CD8-positive, alpha-beta T cell (primary cell): ENCODE measurements at regions of chrX and their contacts with region 1.

Region 1: DNA sequence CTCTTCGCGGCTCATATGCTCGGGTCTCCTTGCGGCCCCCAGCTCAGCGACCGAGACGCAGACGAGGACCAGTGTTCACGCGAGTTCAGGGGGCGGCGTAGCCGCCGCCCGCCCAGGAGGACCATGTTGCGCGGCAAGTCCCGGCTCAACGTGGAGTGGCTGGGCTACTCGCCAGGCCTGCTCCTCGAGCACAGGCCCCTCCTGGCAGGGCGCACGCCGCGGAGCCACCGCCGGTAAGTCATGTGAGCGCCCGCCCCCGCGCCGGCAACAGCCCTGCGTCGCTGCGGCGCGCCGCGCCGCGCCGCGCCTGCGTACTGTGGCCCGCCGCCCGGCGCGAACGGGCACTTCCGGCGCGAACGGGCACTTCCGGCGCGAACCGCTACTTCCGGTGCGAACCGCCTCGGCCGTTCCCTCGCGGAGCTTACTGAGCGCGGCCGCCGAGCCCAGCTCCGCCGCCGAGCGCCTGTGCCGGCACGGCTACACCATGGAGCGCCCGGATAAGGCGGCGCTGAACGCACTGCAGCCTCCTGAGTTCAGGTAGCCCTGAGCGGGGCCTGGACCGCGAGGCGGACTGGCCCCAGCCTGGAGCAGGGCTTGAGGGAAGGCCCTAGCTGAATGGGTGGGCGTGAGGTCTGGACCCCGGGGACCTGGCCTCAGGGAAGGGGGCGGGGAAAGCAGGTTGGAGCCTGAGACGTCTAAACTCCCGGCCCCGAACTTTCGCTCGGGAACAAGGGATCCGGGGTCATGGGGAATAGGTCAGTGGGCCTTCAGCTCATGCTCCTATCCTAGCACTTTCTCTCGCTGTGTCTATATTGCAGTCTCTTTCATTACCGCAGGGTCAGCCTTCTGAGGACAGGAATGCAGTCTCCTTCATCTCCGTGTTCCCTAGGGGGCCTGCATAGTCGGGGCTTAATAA is at the start of gene VMA21:
- DNase-seq: peak; percentile 54 to 90 (median 77)
- ATAC-seq: peak; percentile 74
- H3K4me3 ChIP-seq: peak within 1 kb of the TSS; percentile 70 to 82
- H3K4me3 Mint-ChIP-seq: peak within 1 kb of the TSS; percentile 88
- H3K27ac ChIP-seq: peak within 1 kb of the TSS; percentile 89 to 96
- H3K27ac Mint-ChIP-seq: peak within 1 kb of the TSS; percentile 98
- H3K4me1 ChIP-seq: peaks cover 57% of the 10 kb centered on the region
- H3K4me1 Mint-ChIP-seq: peaks cover 68% of the 10 kb centered on the region
- H3K27me3 ChIP-seq: no peaks in the 10 kb centered on the region
- H3K27me3 Mint-ChIP-seq: no peaks in the 10 kb centered on the region
- CTCF ChIP-seq: no peak
- total RNA-seq, gene VMA21: 17.9 to 19.3 TPM

Region 2: DNA sequence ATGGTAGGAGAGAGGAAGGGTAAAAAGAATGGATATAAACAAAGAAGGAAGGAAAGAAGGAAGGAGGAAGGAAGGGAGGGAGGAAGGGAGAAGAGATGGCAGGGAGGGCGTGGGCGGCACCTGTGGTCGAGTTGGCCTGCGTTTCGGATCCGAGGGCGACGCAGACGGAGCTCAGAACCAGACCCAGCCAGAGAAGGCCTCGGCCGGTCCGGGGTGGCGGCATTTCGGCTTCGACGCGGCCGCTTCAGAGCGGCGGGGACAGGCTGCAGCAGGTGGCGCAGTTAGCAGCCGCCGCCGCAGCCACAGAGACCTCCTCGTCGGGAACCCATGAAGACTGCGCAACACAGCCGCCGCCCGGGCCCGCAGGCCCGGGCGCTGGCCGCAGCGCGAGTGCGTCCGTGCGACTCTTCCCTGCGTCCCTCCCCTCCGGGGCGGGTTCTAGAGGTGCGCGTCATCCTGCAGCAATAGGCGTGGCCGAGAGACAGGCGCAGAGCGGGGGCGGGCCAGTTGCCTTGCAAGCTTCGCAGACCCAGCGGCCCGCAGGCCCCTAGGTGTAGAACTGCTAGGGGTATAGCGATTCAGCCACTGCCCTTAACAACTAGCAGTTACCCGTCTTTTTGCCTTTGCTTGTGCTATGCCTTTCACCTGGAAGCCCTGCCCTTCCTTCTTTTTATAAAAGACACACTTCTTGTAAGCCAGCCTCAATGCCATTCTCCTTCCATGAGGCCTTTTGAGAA is 1892.0 kb before region 1 on chrX and contains the start of gene IDS:
- CTCF ChIA-PET with region 1: no interaction called
- POLR2A ChIA-PET with region 1: no interaction called
- intact Hi-C with region 1: loop called in 1 of 2 experiments (anchors 10 kb)
- DNase-seq: peak; percentile 75 to 94 (median 87)
- ATAC-seq: peak; percentile 67
- H3K4me3 ChIP-seq: peak within 1 kb of the TSS; percentile 80 to 87
- H3K4me3 Mint-ChIP-seq: peak within 1 kb of the TSS; percentile 91
- H3K27ac ChIP-seq: peak within 1 kb of the TSS; percentile 98
- H3K27ac Mint-ChIP-seq: peak within 1 kb of the TSS; percentile 95
- H3K4me1 ChIP-seq: peaks cover 20% of the 10 kb centered on the region
- H3K4me1 Mint-ChIP-seq: peaks cover 34% of the 10 kb centered on the region
- H3K27me3 ChIP-seq: no peaks in the 10 kb centered on the region
- H3K27me3 Mint-ChIP-seq: no peaks in the 10 kb centered on the region
- CTCF ChIP-seq: no peak
- total RNA-seq, gene IDS: 230 to 240 TPM

Region 3: GRCh38 chrX:150898343-150899190 is 498.5 kb before region 1 on chrX and contains the start of gene CD99L2:
- CTCF ChIA-PET with region 1: no interaction called
- POLR2A ChIA-PET with region 1: no interaction called
- intact Hi-C with region 1: loop called in 1 of 2 experiments (anchors 5 kb)
- DNase-seq: peak; percentile 83 to 93 (median 89)
- ATAC-seq: peak; percentile 92
- H3K4me3 ChIP-seq: peak within 1 kb of the TSS; percentile 76 to 77
- H3K4me3 Mint-ChIP-seq: peak within 1 kb of the TSS; percentile 91
- H3K27ac ChIP-seq: peak within 1 kb of the TSS; percentile 36 to 63
- H3K27ac Mint-ChIP-seq: peak within 1 kb of the TSS; percentile 67
- H3K4me1 ChIP-seq: peaks cover 6% of the 10 kb centered on the region
- H3K4me1 Mint-ChIP-seq: peaks cover 11% of the 10 kb centered on the region
- H3K27me3 ChIP-seq: no peaks in the 10 kb centered on the region
- H3K27me3 Mint-ChIP-seq: no peaks in the 10 kb centered on the region
- CTCF ChIP-seq: no peak
- total RNA-seq, gene CD99L2: 6.4 TPM

Region 4: DNA sequence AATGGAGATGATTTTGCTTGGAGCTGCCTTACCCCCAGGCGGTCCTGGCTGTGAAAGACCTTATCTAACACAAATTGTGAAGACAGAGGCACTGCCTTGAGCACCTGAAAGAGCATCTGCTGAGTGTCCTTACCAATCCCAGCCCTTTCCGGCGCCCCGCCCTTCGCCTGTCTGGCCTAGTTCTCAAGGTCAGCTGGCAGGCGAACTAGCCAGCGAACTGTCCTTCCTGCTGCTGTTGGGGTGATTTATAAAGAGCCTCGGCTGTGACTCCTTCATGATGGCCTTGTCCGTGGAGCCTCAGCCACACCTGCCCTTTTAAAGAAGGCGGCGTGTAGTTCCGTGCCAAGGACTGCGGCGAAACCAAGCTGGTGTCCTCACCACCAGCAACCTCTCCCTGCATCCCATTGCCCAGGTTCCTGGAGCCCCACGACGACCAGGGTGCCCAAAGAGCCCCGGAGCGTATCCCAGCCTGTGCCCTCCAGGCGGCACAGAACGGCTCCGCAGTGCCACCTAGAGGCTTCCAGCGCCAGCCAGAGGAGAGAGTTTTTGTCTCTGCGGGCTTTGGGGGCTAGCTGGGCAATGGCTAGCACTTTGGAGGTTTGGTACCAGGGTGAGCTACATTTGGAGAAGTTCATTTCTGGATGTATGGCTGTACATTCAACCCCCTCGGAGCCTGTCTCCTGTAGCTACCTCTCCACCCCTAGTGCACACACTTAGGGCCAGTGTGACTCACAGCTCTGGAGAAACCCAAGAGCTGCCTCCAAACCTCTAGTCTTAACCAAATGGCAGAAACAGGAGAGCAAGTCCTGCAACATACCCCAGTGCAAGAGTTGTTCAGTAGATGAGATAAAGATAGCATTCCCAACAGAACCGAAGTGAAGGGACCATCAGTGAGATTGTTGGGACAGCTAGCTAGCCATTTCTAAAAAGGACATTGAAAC is 36.9 kb before region 1 on chrX:
- CTCF ChIA-PET with region 1: no interaction called
- POLR2A ChIA-PET with region 1: no interaction called
- intact Hi-C with region 1: loop called in 1 of 2 experiments (anchors 5 kb)
- DNase-seq: peak; percentile 4 to 54 (median 35)
- ATAC-seq: peak; percentile 54
- H3K4me3 ChIP-seq: no peak overlapping the region
- H3K4me3 Mint-ChIP-seq: peak overlapping the region; percentile 37
- H3K27ac ChIP-seq: no peak overlapping the region
- H3K27ac Mint-ChIP-seq: no peak overlapping the region
- H3K4me1 ChIP-seq: peaks cover 6% of the 10 kb centered on the region
- H3K4me1 Mint-ChIP-seq: peaks cover 3% of the 10 kb centered on the region
- H3K27me3 ChIP-seq: no peaks in the 10 kb centered on the region
- H3K27me3 Mint-ChIP-seq: peaks cover 16% of the 10 kb centered on the region
- CTCF ChIP-seq: peak; percentile 45

Region 5: DNA sequence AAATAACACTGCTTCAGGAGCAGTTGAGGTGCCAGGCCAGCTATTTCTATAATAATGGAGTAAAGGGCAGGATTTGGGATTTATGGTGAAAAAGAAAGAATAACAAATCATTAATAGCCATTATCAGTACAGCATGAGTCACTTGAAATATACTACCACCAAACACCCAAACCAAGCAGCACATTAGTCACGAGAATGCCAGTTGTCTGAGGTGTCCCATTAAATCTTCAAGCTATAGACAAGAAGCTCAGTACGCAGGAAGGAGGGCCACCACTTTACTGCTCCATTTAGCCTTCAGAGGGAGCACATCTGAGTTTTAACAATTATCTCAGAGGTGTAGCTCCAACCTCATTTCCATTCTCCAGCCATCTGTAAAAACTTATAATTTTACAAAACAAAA is 848.2 kb after region 1 on chrX:
- CTCF ChIA-PET with region 1: no interaction called
- POLR2A ChIA-PET with region 1: no interaction called
- intact Hi-C with region 1: no loop called
- DNase-seq: no peak
- ATAC-seq: no peak
- H3K4me3 ChIP-seq: no peak overlapping the region
- H3K4me3 Mint-ChIP-seq: no peak overlapping the region
- H3K27ac ChIP-seq: no peak overlapping the region
- H3K27ac Mint-ChIP-seq: no peak overlapping the region
- H3K4me1 ChIP-seq: no peaks in the 10 kb centered on the region
- H3K4me1 Mint-ChIP-seq: no peaks in the 10 kb centered on the region
- H3K27me3 ChIP-seq: no peaks in the 10 kb centered on the region
- H3K27me3 Mint-ChIP-seq: no peaks in the 10 kb centered on the region
- CTCF ChIP-seq: no peak

Region 6: DNA sequence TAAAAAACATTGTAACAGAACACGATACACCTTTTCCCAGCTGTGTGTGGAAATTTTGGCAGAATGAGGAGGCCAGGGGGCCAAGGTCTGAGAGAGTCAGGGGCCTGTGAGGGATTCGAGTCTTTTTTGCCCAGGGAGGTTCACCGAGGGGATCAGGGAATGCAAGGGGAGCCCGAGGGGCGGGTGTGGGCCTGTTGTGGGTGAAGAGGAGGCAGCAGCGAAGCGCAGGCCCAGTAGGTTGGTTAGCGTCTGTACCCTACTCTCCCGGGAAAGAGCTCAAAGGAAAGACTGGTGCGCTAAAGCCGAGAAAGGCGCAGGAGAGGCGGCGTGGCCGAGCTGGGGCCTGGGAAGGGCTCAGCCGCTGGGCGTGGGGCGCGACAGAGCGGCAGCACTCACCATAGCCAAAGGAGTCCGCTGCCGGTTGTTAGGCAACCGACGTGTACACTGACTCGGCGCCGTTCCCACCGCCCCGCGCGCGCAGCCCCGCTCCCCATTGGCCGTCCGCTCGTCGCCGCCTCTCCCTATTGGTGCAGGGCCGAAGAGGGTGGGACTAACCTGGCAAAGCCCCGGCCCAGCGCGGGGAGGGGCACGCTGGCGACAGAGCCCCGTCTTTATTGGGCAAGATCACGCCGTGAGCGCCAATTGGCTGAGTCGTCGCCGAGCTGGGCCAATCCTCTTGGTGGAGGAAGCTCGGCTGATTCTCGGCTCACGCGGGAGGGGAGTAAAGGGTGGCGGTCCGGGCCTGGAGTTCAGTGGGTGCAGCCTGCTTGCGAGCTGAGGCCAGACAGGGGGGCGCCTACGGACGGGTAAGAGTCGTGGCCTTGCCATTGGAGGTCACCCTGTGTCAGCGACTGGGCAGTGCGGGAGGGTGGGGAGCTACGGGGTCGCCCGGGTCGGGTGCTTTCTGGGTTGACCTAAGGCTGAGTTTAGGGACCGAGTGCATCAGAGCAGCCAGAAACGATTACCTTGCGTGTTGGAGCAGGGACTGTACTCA is 1433.5 kb after region 1 on chrX and contains the starts of genes CETN2 and NSDHL:
- CTCF ChIA-PET with region 1: no interaction called
- POLR2A ChIA-PET with region 1: no interaction called
- intact Hi-C with region 1: loop called in 1 of 2 experiments (anchors 10 kb)
- DNase-seq: peak; percentile 87 to 95 (median 92)
- ATAC-seq: peak; percentile 97
- H3K4me3 ChIP-seq: peak within 1 kb of the TSS; percentile 71 to 85
- H3K4me3 Mint-ChIP-seq: peak within 1 kb of the TSS; percentile 96
- H3K27ac ChIP-seq: peak within 1 kb of the TSS; percentile 82 to 88
- H3K27ac Mint-ChIP-seq: peak within 1 kb of the TSS; percentile 91
- H3K4me1 ChIP-seq: peaks cover 18% of the 10 kb centered on the region
- H3K4me1 Mint-ChIP-seq: peaks cover 32% of the 10 kb centered on the region
- H3K27me3 ChIP-seq: no peaks in the 10 kb centered on the region
- H3K27me3 Mint-ChIP-seq: no peaks in the 10 kb centered on the region
- CTCF ChIP-seq: no peak
- total RNA-seq, gene CETN2: 3.9 to 4.9 TPM
- total RNA-seq, gene NSDHL: 3.3 to 3.6 TPM